Right ventricle myocardium superior (tissue), 1 donor: ENCODE measurements at regions of chr1 and their contacts with region 1.

Region 1: GRCh38 chr1:109397538-109398342 is at the start of gene SORT1:
- DNase-seq: peak; percentile 91
- ATAC-seq: peak; percentile 88
- total RNA-seq, gene SORT1: 127 TPM

Region 2: DNA sequence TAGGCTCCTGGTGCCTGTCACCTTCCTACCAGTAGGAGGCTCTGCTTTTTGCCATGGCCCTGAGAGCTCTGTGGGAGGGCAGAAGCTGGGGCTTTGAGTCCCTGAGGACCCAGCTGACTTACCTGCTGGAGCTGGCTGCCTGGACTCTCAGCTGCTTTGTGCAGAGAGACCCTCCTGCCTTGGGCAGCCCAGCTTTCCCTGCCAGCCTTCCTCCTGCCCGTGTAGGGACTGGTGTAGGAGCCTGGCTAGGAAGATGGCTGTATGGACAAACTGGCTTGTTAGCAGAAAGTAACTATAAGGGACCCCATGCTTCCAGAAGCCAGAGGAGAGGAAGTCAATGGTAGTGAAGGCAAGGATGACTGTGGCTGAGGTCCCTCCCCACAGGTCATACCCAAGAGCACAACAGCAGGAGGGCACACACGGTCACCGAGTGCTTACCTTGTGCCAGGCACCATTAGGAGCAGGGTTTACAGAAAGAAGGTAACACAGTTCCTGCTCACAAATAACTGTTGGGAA is 158.1 kb before region 1 on chr1:
- intact Hi-C with region 1: no loop called
- DNase-seq: no peak
- ATAC-seq: peak; percentile 34

Region 3: GRCh38 chr1:109277434-109278204 is 120.1 kb before region 1 on chr1:
- intact Hi-C with region 1: loop called (anchors 2 kb)
- DNase-seq: peak; percentile 85
- ATAC-seq: peak; percentile 76

Region 4: GRCh38 chr1:109350655-109351054 is 47.1 kb before region 1 on chr1:
- intact Hi-C with region 1: loop called (anchors 5 kb)
- DNase-seq: no peak
- ATAC-seq: no peak

Region 5: GRCh38 chr1:109454497-109455133 is 56.9 kb after region 1 on chr1:
- intact Hi-C with region 1: no loop called
- DNase-seq: no peak
- ATAC-seq: no peak